Endothelial cell of umbilical vein (primary cell): ENCODE measurements at regions of chr17 and their contacts with region 1.

Region 1: GRCh38 chr17:17237026-17237799 is at the start of gene FLCN:
- DNase-seq: peak; percentile 90
- H3K4me3 ChIP-seq: peak within 1 kb of the TSS; percentile 69 to 91 (median 71)
- H3K27ac ChIP-seq: peak within 1 kb of the TSS; percentile 98
- H3K4me1 ChIP-seq: peaks cover 10% of the 10 kb centered on the region
- H3K27me3 ChIP-seq: no peaks in the 10 kb centered on the region
- CTCF ChIP-seq: no peak
- POLR2A ChIP-seq: peak; percentile 83
- total RNA-seq, gene FLCN: 56.9 and 68.9 TPM in 2 replicates

Region 2: GRCh38 chr17:17191346-17191792 is 45.8 kb before region 1 on chr17:
- CTCF ChIA-PET with region 1: no interaction called
- POLR2A ChIA-PET with region 1: no interaction called
- dilution Hi-C with region 1: no loop called
- intact Hi-C with region 1: loop called (anchors 2 kb)
- DNase-seq: peak; percentile 93
- H3K4me3 ChIP-seq: no peak overlapping the region
- H3K27ac ChIP-seq: peak overlapping the region; percentile 79
- H3K4me1 ChIP-seq: peaks cover 21% of the 10 kb centered on the region
- H3K27me3 ChIP-seq: no peaks in the 10 kb centered on the region
- CTCF ChIP-seq: no peak
- POLR2A ChIP-seq: peak; percentile 34

Region 3: GRCh38 chr17:17258998-17259397 is 21.8 kb after region 1 on chr17:
- CTCF ChIA-PET with region 1: interaction called, 4 read pairs
- POLR2A ChIA-PET with region 1: no interaction called
- dilution Hi-C with region 1: no loop called
- intact Hi-C with region 1: loop called (anchors 2 kb)
- DNase-seq: no peak
- H3K4me3 ChIP-seq: no peak overlapping the region
- H3K27ac ChIP-seq: no peak overlapping the region
- H3K4me1 ChIP-seq: no peaks in the 10 kb centered on the region
- H3K27me3 ChIP-seq: no peaks in the 10 kb centered on the region
- CTCF ChIP-seq: no peak
- POLR2A ChIP-seq: no peak

Region 4: GRCh38 chr17:17313350-17313991 is 76.3 kb after region 1 on chr17:
- CTCF ChIA-PET with region 1: no interaction called
- POLR2A ChIA-PET with region 1: no interaction called
- dilution Hi-C with region 1: no loop called
- intact Hi-C with region 1: loop called (anchors 2 kb)
- DNase-seq: peak; percentile 16
- H3K4me3 ChIP-seq: no peak overlapping the region
- H3K27ac ChIP-seq: no peak overlapping the region
- H3K4me1 ChIP-seq: peaks cover 4% of the 10 kb centered on the region
- H3K27me3 ChIP-seq: no peaks in the 10 kb centered on the region
- CTCF ChIP-seq: peak; percentile 19 to 21
- POLR2A ChIP-seq: no peak